ENCODE measurements at regions of chr6 and their contacts with region 1.

Region 1: DNA sequence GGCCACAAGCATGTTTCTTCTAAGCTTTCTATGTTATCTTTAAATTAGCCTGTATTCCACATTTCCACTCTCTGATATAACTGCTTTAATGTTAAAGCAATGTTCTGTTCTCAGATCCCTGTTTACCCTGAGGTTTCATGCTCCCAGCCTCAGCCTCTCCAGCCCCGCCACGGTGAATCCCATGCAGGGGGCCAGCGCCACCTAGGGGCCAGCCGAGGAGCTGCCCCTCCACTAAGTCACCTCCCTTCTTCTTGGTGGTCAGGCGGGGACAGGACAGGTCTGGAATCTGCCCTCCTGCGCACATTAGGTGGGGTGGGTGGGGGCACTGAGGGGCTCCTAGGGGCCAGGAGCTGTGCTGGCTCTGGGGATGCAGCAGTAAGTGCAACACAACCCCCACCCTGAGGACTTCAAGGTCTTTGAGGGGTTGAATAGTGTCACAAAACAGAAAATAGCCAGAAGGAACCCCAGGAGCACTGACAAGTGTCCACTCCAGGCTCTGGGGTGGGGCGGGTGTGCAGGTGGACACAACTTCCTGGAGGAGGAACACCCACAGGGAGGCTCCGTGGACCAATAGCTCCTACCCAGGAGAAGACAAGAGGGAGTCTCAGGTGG is 61.6 kb downstream of the RAB44 start:
- DNase-seq: peak; percentile 79
- ATAC-seq: peak; percentile 45
- H3K4me3 Mint-ChIP-seq: peak overlapping the region; percentile 63
- H3K27ac Mint-ChIP-seq: peak overlapping the region; percentile 97
- H3K4me1 Mint-ChIP-seq: peaks cover 56% of the 10 kb centered on the region
- H3K27me3 Mint-ChIP-seq: no peaks in the 10 kb centered on the region
- CTCF ChIP-seq: no peak

Region 2: DNA sequence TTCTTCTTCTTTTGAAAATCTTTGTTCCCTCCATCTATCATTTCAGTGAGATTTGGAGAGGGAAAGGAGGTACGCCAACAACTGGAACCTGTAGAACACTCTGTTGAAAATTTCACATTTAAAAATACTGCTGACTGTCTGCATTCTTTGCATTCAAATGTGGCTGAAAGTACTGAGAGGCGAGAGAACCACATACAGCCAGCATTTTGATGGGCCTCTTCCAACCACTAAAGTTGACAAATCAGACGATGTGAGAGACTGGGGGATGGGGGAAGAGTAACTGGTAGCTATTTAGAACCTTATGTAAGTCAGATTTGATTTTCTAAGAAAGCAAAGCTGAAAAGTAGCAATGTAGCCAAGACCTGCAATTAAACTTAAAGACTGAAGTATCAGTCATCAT is 1148.0 kb before region 1 on chr6:
- CTCF ChIA-PET with region 1: no interaction called
- POLR2A ChIA-PET with region 1: no interaction called
- intact Hi-C with region 1: no loop called
- DNase-seq: no peak
- ATAC-seq: no peak
- H3K4me3 Mint-ChIP-seq: no peak overlapping the region
- H3K27ac Mint-ChIP-seq: no peak overlapping the region
- H3K4me1 Mint-ChIP-seq: no peaks in the 10 kb centered on the region
- H3K27me3 Mint-ChIP-seq: no peaks in the 10 kb centered on the region
- CTCF ChIP-seq: no peak

Region 3: DNA sequence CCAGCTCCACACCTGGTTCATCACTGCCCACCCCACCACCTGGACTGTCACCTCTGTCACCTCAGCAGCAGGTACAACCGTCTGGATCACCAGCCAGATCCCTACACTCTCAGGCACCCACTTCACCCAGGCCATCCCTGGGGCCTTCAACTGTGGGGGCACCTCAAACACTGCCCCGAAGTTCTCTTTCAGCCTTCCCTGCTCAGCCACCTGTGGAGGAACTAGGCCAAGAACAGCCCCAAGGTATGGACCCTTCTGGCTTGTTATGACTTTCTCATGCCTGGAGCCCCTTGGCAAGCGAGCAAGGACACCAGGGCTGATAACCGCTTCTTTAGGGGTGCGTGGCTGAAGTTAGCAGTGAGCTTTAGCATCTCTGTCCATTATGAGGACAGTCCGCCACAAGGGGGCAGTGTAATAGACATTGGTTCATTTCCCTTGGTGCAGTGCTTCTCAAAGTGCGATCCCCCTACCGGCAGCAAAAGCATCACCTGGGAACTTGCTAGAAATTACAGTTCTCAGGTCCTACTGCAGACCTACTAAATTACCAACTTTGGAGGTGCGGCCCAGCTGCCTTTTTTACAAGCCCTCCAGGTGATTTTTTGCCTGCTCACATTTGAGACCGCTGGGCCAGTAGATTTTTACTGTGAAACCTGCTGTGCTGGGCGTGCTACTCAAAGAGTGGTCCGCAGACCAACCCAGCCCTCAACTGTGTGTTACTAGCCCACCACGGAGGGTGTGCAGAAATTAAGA is 456.9 kb before region 1 on chr6:
- CTCF ChIA-PET with region 1: no interaction called
- POLR2A ChIA-PET with region 1: no interaction called
- intact Hi-C with region 1: loop called (anchors 1 kb)
- DNase-seq: peak; percentile 65
- ATAC-seq: peak; percentile 99
- H3K4me3 Mint-ChIP-seq: no peak overlapping the region
- H3K27ac Mint-ChIP-seq: no peak overlapping the region
- H3K4me1 Mint-ChIP-seq: peaks cover 1% of the 10 kb centered on the region
- H3K27me3 Mint-ChIP-seq: peaks cover 21% of the 10 kb centered on the region
- CTCF ChIP-seq: peak; percentile 82

Region 4: DNA sequence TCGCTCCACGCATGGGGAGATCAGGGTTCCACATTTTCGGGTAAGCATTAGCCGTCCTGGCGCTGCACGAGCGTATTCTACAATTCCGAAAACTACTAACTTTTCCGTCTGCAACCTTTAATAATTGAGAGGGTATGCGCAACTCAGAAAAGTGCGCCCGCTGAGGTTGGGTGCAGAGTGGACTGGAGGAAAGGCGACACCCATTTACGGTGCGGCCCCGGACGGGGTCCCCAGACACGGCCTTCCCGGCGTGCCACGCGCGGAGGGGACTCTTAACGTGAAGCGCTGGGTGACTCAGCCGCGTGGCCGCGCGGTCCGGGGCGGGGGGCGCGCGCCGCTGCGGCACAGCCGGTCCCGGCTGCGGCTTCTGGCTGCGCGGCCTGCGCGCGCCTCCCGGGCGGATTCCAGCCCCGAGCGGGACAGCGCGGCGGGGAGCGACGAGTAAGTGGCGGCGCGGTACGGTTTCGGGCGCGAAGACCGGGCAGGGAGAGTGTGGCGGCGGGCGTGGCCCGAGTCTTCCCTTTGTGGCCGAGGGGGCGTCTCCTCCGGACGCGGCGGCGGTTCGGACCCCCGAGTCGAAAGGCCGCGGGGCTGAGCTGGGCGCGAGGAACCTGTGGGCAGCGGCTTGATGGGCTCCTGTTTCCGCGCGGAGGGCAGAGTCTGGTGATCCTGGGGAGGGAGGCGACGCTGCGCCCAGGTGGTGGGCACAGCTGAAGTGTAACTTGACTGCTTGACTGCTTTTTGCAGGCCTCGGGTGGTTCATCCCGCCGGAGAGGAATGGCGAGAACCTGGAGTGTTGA is 316.4 kb before region 1 on chr6 and contains the starts of genes KCTD20 and PXT1:
- CTCF ChIA-PET with region 1: no interaction called
- POLR2A ChIA-PET with region 1: interaction called, 5 read pairs
- intact Hi-C with region 1: loop called (anchors 5 kb)
- DNase-seq: peak; percentile 85
- ATAC-seq: peak; percentile 84
- H3K4me3 Mint-ChIP-seq: peak within 1 kb of the TSS; percentile 98
- H3K27ac Mint-ChIP-seq: peak within 1 kb of the TSS; percentile 96
- H3K4me1 Mint-ChIP-seq: peaks cover 46% of the 10 kb centered on the region
- H3K27me3 Mint-ChIP-seq: no peaks in the 10 kb centered on the region
- CTCF ChIP-seq: no peak
- total RNA-seq, gene KCTD20: 45.5 and 48.1 TPM in 2 replicates
- total RNA-seq, gene PXT1: 0.11 and 0.22 TPM in 2 replicates

Region 5: DNA sequence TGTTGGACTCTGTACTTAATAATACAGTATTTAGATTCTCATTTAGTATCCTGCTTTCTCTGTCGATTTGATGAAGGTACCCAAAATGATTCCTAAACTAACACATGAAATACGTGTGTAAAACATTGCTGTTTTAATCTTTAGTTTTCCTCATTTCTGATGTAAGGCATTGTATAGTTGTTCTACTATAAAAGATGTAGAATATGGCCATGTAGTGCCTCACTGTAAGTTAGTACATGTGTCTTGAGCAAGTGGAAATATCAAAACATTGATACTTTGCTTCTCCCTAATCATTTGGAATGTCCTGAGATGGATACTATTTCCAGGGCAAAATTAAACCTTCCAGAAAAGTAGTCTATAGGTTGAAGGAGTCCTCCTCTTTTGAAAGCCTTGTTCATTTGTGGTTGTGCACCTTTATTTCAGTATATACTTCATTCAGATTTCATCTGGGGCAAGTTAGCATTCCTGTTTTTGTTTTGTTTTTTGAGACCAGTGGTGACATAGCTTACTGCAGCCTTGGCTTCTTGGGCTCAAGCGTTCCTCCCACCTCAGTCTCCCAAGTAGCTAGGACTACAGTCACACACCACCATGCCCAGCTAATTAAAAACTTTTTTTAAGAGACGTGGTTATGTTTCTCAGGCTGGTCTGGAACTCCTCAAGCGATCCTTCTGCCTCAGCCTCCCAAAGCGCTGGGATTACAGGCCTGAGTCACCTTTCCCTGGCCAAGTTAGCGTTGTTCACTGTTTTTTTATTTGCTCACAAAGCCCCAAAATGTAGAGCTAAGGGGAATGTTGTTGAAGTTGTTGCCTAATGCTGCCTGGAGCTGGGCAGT is 153.5 kb before region 1 on chr6:
- CTCF ChIA-PET with region 1: interaction called, 19 read pairs
- POLR2A ChIA-PET with region 1: interaction called, 12 read pairs
- intact Hi-C with region 1: no loop called
- DNase-seq: no peak
- ATAC-seq: no peak
- H3K4me3 Mint-ChIP-seq: no peak overlapping the region
- H3K27ac Mint-ChIP-seq: peak overlapping the region; percentile 50
- H3K4me1 Mint-ChIP-seq: peaks cover 72% of the 10 kb centered on the region
- H3K27me3 Mint-ChIP-seq: no peaks in the 10 kb centered on the region
- CTCF ChIP-seq: no peak

Region 6: GRCh38 chr6:36623547-36624459 is 135.5 kb before region 1 on chr6:
- CTCF ChIA-PET with region 1: interaction called, 121 read pairs
- POLR2A ChIA-PET with region 1: interaction called, 16 read pairs
- intact Hi-C with region 1: loop called (anchors 1 kb)
- DNase-seq: peak; percentile 64
- ATAC-seq: peak; percentile 90
- H3K4me3 Mint-ChIP-seq: no peak overlapping the region
- H3K27ac Mint-ChIP-seq: peak overlapping the region; percentile 47
- H3K4me1 Mint-ChIP-seq: peaks cover 29% of the 10 kb centered on the region
- H3K27me3 Mint-ChIP-seq: no peaks in the 10 kb centered on the region
- CTCF ChIP-seq: peak; percentile 51

Region 7: GRCh38 chr6:36724514-36725390 is 34.5 kb before region 1 on chr6:
- CTCF ChIA-PET with region 1: interaction called, 8 read pairs
- POLR2A ChIA-PET with region 1: interaction called, 6 read pairs
- intact Hi-C with region 1: loop called (anchors 1 kb)
- DNase-seq: no peak
- ATAC-seq: peak; percentile 14
- H3K4me3 Mint-ChIP-seq: no peak overlapping the region
- H3K27ac Mint-ChIP-seq: peak overlapping the region; percentile 25
- H3K4me1 Mint-ChIP-seq: peaks cover 57% of the 10 kb centered on the region
- H3K27me3 Mint-ChIP-seq: no peaks in the 10 kb centered on the region
- CTCF ChIP-seq: no peak

Region 8: DNA sequence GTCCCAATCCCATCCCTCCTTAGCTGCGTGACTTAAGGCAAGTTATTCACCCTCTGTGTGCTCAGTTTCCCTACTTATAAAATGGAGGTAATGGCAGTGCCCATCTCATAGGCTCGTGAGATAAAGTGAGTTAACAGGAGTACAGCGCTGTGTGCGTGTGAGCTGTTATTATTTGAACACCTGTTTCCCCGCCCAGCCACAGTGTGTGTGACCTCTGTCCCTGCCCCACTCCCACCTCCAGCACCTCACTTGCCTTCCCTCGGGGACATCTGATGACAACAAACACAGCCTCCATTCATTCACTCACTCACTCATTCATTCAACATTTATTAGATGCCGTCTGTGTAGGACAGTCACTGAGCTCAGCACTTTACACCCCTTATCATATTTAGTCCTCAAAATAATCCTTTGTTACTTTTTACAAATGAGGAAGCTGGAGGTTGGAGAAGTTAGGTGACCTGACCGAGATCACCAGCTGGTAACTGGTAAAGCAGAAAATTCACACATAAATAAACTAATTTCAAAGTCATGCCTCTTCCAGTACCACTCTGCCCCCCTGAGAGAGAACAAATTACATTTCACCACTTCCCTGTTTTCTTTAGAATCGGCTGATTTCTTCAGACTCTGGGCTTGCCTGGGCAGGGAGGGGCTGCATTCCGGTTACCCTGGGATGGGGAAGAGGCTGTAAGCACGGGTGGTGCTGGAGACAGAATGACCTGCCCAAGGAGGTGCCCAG is 21.4 kb after region 1 on chr6:
- CTCF ChIA-PET with region 1: interaction called, 98 read pairs
- POLR2A ChIA-PET with region 1: interaction called, 13 read pairs
- intact Hi-C with region 1: no loop called
- DNase-seq: no peak
- ATAC-seq: peak; percentile 35
- H3K4me3 Mint-ChIP-seq: peak overlapping the region; percentile 17
- H3K27ac Mint-ChIP-seq: peak overlapping the region; percentile 76
- H3K4me1 Mint-ChIP-seq: peaks cover 25% of the 10 kb centered on the region
- H3K27me3 Mint-ChIP-seq: peaks cover 10% of the 10 kb centered on the region
- CTCF ChIP-seq: no peak

Measured in activated B cell treated with CpG ODN at 0.5 μM for 24 hours (primary cell).